Naive thymus-derived CD4-positive, alpha-beta T cell (primary cell): ENCODE measurements at regions of chr17 and their contacts with region 1.

Region 1: DNA sequence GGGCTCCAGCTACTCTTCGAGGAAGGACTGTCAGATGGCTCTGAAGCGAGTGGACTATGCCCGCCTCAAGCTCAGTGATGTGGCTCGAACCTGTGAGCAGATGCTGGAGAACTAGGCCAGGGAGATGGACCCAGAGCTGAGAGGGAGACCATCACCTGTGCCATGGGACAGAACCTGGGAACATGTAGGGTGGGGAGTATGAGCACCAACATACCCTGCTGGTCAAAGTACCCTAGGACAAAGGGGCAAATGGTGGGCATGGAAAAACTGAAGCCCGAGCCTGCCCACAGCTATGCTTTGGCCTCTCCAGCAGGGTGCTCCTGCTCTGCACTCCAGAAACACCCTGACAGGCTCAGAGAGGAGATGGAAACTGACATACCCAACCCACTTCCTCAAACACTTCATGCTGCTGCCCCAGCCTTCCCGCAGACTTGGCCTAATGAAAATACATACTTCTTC is 1.9 kb downstream of the MED11 start:
- DNase-seq: no peak
- ATAC-seq: peak; percentile 40
- H3K4me3 ChIP-seq: no peak overlapping the region
- H3K4me3 Mint-ChIP-seq: peak overlapping the region in 8 of 10 donors; percentile 8 to 99 (median 44)
- H3K27ac ChIP-seq: no peak overlapping the region
- H3K27ac Mint-ChIP-seq: peak overlapping the region in 4 of 9 donors; percentile 25 to 55 (median 44)
- H3K4me1 ChIP-seq: peaks cover 10 to 14% of the 10 kb centered on the region in 2 donors
- H3K4me1 Mint-ChIP-seq: peaks cover 4 to 39% (median 28%) of the 10 kb centered on the region in 7 donors
- H3K27me3 ChIP-seq: no peaks in the 10 kb centered on the region
- H3K27me3 Mint-ChIP-seq: peaks cover 0 to 6% (median 0%) of the 10 kb centered on the region in 5 donors

Region 2: DNA sequence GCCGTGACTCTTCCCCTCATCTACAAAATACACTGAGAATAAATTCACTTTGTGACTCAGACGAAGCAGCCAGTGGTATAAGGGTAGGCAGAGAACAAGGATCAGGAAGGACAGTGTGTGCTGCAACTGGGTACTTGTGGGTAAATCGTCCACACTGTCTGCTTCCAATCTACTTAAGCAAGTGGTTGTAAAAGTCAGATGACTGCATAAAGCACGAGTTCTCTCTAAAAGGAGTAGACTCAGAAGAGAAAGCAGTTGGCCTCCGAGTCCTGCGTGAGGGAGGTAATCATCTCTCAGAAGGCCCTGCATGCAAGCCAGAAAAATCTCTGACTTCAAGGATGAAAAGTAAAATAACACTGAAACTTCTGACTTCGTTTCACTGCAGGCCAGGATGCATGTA is 512.4 kb before region 1 on chr17:
- CTCF ChIA-PET with region 1: no interaction called
- POLR2A ChIA-PET with region 1: no interaction called
- intact Hi-C with region 1: no loop called
- DNase-seq: no peak
- ATAC-seq: no peak
- H3K4me3 ChIP-seq: no peak overlapping the region
- H3K4me3 Mint-ChIP-seq: no peak overlapping the region
- H3K27ac ChIP-seq: no peak overlapping the region
- H3K27ac Mint-ChIP-seq: peak overlapping the region in 2 of 9 donors; percentile 16 to 31
- H3K4me1 ChIP-seq: no peaks in the 10 kb centered on the region
- H3K4me1 Mint-ChIP-seq: peaks cover under 1 to 4% (median 2%) of the 10 kb centered on the region in 7 donors
- H3K27me3 ChIP-seq: no peaks in the 10 kb centered on the region
- H3K27me3 Mint-ChIP-seq: no peaks in the 10 kb centered on the region

Region 3: GRCh38 chr17:4534026-4534914 is 198.8 kb before region 1 on chr17:
- CTCF ChIA-PET with region 1: no interaction called
- POLR2A ChIA-PET with region 1: no interaction called
- intact Hi-C with region 1: no loop called
- DNase-seq: no peak
- ATAC-seq: peak; percentile 21
- H3K4me3 ChIP-seq: no peak overlapping the region
- H3K4me3 Mint-ChIP-seq: no peak overlapping the region
- H3K27ac ChIP-seq: no peak overlapping the region
- H3K27ac Mint-ChIP-seq: no peak overlapping the region
- H3K4me1 ChIP-seq: no peaks in the 10 kb centered on the region
- H3K4me1 Mint-ChIP-seq: peaks cover 0 to 16% (median 3%) of the 10 kb centered on the region in 7 donors
- H3K27me3 ChIP-seq: no peaks in the 10 kb centered on the region
- H3K27me3 Mint-ChIP-seq: peaks cover 0 to 15% (median 5%) of the 10 kb centered on the region in 5 donors

Region 4: GRCh38 chr17:4715063-4715744 is 17.9 kb before region 1 on chr17:
- CTCF ChIA-PET with region 1: interaction called, 10 read pairs
- POLR2A ChIA-PET with region 1: interaction called, 12 read pairs
- intact Hi-C with region 1: loop called (anchors 1 kb)
- DNase-seq: peak in 8 of 9 donors; percentile 39 to 49 (median 46)
- ATAC-seq: no peak
- H3K4me3 ChIP-seq: peak overlapping the region; percentile 48
- H3K4me3 Mint-ChIP-seq: peak overlapping the region; percentile 74 to 97 (median 84)
- H3K27ac ChIP-seq: peak overlapping the region; percentile 73
- H3K27ac Mint-ChIP-seq: peak overlapping the region; percentile 89 to 96 (median 93)
- H3K4me1 ChIP-seq: peaks cover 39 to 41% of the 10 kb centered on the region in 2 donors
- H3K4me1 Mint-ChIP-seq: peaks cover 32 to 54% (median 47%) of the 10 kb centered on the region in 7 donors
- H3K27me3 ChIP-seq: no peaks in the 10 kb centered on the region
- H3K27me3 Mint-ChIP-seq: no peaks in the 10 kb centered on the region

Region 5: GRCh38 chr17:4796553-4796921 is 63.4 kb after region 1 on chr17:
- CTCF ChIA-PET with region 1: no interaction called
- POLR2A ChIA-PET with region 1: interaction called, 3 read pairs
- intact Hi-C with region 1: loop called (anchors 1 kb)
- DNase-seq: peak in 1 of 9 donors; percentile 43
- ATAC-seq: no peak
- H3K4me3 ChIP-seq: peak overlapping the region; percentile 76
- H3K4me3 Mint-ChIP-seq: peak overlapping the region; percentile 96 to 100 (median 99)
- H3K27ac ChIP-seq: peak overlapping the region; percentile 84
- H3K27ac Mint-ChIP-seq: peak overlapping the region; percentile 90 to 99 (median 96)
- H3K4me1 ChIP-seq: peaks cover 7% of the 10 kb centered on the region in 2 donors
- H3K4me1 Mint-ChIP-seq: peaks cover 12 to 14% (median 13%) of the 10 kb centered on the region in 7 donors
- H3K27me3 ChIP-seq: no peaks in the 10 kb centered on the region
- H3K27me3 Mint-ChIP-seq: peaks cover 0 to 6% (median 0%) of the 10 kb centered on the region in 5 donors

Region 6: GRCh38 chr17:4881761-4882555 is 148.9 kb after region 1 on chr17:
- CTCF ChIA-PET with region 1: interaction called, 5 read pairs
- POLR2A ChIA-PET with region 1: interaction called, 3 read pairs
- intact Hi-C with region 1: loop called (anchors 1 kb)
- DNase-seq: peak; percentile 51 to 73 (median 61)
- ATAC-seq: peak; percentile 90
- H3K4me3 ChIP-seq: no peak overlapping the region
- H3K4me3 Mint-ChIP-seq: no peak overlapping the region
- H3K27ac ChIP-seq: no peak overlapping the region
- H3K27ac Mint-ChIP-seq: no peak overlapping the region
- H3K4me1 ChIP-seq: no peaks in the 10 kb centered on the region
- H3K4me1 Mint-ChIP-seq: peaks cover 0 to 4% (median 0%) of the 10 kb centered on the region in 7 donors
- H3K27me3 ChIP-seq: no peaks in the 10 kb centered on the region
- H3K27me3 Mint-ChIP-seq: no peaks in the 10 kb centered on the region

Region 7: DNA sequence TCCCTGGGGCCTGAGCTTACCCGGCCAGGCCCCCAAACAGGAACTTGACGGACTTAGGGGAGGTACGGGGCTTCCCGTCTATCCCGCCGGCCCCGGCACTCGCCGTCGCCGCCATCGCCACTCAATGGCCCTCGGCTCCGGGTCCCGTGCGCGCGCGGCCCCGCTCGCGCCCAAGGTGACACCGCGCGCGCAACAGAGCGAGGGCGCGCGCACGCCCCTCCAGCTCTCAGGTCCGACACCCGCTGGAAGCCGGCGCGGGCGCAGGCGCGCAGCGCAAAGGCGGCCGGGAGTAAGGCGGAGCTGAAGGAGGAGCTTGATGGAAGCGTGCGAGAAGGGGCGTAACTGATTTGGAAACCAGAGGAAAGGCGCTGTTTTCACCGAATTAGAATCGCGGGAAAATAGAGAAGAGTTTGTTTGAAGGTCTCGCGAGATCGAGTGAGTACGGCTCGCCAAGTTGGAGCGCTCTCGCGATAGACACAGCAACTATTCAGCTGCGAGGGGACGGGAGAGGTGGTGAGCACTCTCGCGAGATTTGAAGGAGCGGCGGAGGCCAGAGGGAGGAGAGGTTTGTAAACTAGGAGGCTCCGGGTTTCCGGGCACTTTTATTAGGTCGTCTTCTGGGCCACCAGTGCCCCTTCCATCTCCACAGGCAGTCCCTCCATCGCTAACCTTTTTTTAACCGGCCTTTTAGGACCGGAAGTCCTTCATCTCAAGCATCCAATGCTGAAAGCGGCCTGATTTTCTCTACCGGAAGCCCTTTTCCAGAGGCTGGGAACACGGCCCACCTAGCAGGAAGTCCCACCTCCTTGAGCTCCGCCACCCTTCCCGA is 206.9 kb after region 1 on chr17 and contains the starts of genes RNF167 and SLC25A11:
- CTCF ChIA-PET with region 1: no interaction called
- POLR2A ChIA-PET with region 1: interaction called, 3 read pairs
- intact Hi-C with region 1: loop called (anchors 1 kb)
- DNase-seq: peak; percentile 86 to 99 (median 98)
- ATAC-seq: peak; percentile 94
- H3K4me3 ChIP-seq: peak within 1 kb of the TSS; percentile 89
- H3K4me3 Mint-ChIP-seq: peak within 1 kb of the TSS; percentile 92 to 100 (median 98)
- H3K27ac ChIP-seq: peak within 1 kb of the TSS; percentile 89
- H3K27ac Mint-ChIP-seq: peak within 1 kb of the TSS; percentile 89 to 98 (median 95)
- H3K4me1 ChIP-seq: peaks cover 47 to 48% of the 10 kb centered on the region in 2 donors
- H3K4me1 Mint-ChIP-seq: peaks cover 52 to 77% (median 66%) of the 10 kb centered on the region in 7 donors
- H3K27me3 ChIP-seq: no peaks in the 10 kb centered on the region
- H3K27me3 Mint-ChIP-seq: no peaks in the 10 kb centered on the region
- total RNA-seq, gene RNF167: 97.3 to 248 (median 148) TPM
- total RNA-seq, gene SLC25A11: 27.0 to 82.6 (median 44.1) TPM